ENCODE measurements at regions of chr16 and their contacts with region 1.

Region 1: DNA sequence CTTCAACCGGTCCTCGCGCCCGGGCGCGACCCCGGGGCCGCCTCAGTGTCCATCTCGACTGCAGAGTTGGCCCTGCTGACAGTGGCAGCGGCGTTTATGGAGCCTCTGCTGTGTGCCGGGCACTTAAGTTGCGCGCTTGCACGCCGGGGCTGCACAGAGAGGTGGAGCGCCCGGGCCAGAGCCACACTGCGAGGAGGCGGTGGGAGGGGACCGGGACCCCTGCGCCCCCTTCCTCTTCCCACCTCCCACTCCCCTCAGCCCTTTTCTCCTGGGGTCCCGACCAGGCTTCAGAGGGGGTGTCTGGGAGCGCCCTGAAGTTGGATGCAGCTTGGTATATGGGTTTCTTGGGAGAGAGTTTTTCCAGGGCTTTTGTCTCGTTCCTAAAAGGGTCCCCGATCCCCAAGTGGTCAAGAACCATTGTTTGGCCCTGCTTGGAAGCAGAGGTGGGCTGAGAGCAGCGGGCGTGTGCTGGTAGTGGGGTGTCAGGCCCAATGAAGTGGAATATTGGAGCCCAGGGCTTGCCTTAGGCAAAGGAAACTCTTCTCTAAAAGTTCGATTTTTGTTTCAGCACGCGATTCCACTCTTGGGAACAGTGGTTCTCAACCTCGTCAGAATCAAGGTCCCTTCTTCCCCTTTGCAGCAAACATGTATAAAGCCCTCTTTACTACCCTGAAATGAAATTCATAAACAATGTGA is 605 bp downstream of the MRTFB start:
- DNase-seq: no peak

Region 2: DNA sequence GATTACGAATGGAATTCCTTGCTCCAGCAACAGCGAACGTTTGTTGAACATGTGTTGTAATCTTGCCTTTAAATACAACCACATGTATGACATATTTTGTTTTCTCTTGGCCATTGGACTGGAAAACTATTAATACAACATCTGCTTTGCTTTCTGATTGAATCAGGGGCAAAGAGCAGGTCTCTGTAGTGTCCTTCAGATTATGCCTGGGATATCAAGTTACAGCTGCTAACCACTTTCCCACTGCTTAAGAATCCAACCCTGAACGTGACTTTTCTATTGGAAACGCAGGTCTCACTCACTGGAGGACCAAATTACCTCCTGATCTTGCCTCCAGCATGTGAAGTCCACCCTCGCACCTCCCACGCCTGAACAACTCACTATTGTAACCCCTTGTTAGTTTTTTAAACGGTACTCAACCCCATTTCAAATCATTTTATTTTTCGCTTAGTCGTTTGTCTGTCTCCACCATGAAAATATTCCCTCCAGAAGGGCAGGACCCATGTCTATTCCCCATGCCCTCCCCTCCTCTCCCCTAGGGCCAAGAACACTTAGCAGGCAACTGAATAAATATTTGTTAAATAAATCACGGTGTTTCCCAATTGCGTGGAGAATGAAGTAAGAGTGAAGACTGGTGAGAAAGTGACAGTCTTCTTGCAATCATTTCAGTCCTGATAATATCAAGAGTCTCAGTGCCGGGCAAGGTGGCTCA is 58.0 kb before region 1 on chr16:
- intact Hi-C with region 1: loop called in 1 of 2 experiments (anchors 10 kb)
- DNase-seq: no peak

Region 3: GRCh38 chr16:14028202-14028601 is 43.5 kb before region 1 on chr16:
- intact Hi-C with region 1: no loop called
- DNase-seq: no peak

Region 4: DNA sequence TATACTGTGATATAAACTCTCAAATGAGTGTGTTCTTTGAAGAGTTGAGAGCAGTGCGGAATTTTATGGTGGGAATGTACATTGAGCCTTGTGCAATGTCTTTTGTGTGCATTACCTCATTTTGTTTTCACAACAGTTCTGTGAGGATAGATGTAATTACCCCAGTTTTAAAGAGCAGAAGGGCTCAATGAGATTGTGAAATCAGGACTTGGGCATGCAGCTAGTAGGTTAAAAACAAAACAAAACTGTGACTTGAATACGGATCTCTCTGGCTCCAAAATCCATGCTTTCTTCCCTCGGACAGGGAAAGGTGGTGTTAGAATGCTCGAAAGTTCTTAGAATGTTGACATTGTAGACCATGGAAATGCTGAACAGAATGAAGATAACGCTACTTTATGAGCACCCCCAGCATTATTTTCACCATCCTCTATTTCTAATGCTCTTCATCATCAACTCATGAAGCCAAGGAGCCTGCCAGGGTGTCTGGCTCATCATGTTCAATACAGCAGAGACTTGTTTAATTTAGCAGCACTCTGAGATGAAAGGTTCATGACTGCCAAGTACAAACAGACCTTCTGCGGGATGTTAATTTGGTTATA is 16.5 kb after region 1 on chr16:
- intact Hi-C with region 1: no loop called
- DNase-seq: no peak

Region 5: GRCh38 chr16:14151256-14152030 is 79.7 kb after region 1 on chr16:
- intact Hi-C with region 1: no loop called
- DNase-seq: no peak

Region 6: DNA sequence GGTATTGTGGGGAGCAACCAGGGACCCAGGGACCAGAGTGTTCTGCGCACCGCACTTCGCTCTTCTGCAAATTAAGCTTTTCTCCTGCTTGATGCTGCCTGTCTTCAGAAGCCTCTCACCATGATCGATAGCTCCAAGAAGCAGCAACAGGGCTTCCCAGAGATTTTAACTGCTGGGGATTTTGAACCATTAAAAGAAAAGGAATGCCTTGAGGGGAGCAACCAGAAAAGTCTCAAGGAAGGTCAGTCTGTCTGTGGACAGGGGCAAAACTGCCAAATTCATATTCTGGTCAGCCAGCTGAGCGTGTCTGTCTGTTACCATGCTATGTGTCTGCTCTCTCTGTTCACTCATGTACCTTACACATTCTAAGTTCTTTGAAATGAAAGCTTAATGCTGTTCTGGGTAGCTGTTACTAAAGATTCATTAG is 115.1 kb after region 1 on chr16:
- intact Hi-C with region 1: loop called in 1 of 2 experiments (anchors 1 kb)
- DNase-seq: no peak